H1 (cell line): ENCODE measurements at regions of chr1 and their contacts with region 1.

Region 1: DNA sequence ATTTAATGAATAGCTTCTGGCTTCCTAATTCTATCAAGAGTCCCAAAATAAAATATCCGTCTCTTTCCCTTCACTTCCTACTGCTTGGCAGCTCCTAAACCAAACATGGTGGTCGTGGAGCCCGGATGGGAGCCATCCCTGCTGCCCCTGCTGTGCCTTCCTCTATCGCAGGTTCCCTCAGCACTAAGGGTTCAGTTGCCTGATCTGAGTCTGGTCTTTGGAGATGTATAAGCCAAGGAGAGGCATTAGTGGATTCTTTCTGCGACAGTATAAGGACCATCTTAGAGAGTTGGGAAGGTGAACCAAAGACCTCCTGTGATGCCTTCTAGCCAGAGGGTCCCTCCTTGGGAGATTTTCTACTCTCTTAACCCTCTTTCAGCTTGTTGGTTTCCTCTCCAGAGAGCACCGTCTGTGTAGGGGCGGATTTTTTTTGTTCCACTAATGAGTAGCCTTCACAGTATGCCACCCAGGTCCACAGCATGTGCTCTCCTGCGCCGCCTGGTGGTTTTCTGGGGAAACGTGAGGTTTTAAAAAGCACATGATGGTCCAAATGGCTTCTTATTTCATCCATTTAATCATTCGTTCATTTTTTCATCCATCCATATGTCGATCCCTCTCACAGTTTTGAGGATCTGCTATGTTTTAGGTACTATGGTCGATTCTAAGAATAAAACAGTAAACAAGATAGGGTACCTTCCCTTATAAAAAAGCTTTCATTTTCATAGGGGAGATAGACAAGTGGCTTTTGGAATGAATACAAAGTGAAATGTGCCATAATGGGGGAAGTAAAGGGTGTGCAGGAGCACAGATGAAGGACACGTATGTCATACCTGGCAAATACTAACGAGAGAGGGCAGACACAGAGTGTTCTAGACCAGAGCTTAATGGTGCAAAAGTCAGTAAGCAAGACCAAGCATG is 71.0 kb downstream of the NFASC start:
- DNase-seq: peak; percentile 53 to 92
- H3K4me3 ChIP-seq: no peak overlapping the region
- H3K27ac ChIP-seq: no peak overlapping the region
- H3K4me1 ChIP-seq: peaks cover 0 to 3% (median 2%) of the 10 kb centered on the region in 4 experiments; a peak in 2 of 7 replicates
- H3K27me3 ChIP-seq: no peaks in the 10 kb centered on the region; a peak in 1 of 7 replicates
- CTCF ChIP-seq: peak; percentile 78 to 94 (median 93)
- EP300 ChIP-seq: no peak
- POLR2A ChIP-seq: no peak
- RAD21 ChIP-seq: peak; percentile 83 to 88

Region 2: GRCh38 chr1:204814181-204814884 is 127.3 kb before region 1 on chr1:
- CTCF ChIA-PET with region 1: interaction called, 278 read pairs
- POLR2A ChIA-PET with region 1: no interaction called
- DNase-seq: no peak
- H3K4me3 ChIP-seq: no peak overlapping the region
- H3K27ac ChIP-seq: no peak overlapping the region
- H3K4me1 ChIP-seq: no peaks in the 10 kb centered on the region
- H3K27me3 ChIP-seq: no peaks in the 10 kb centered on the region
- CTCF ChIP-seq: no peak
- EP300 ChIP-seq: no peak
- POLR2A ChIP-seq: no peak
- RAD21 ChIP-seq: no peak

Region 3: GRCh38 chr1:204858363-204858821 is 83.3 kb before region 1 on chr1:
- CTCF ChIA-PET with region 1: interaction called, 20 read pairs
- POLR2A ChIA-PET with region 1: no interaction called
- DNase-seq: no peak
- H3K4me3 ChIP-seq: no peak overlapping the region
- H3K27ac ChIP-seq: no peak overlapping the region
- H3K4me1 ChIP-seq: peaks cover 2 to 5% (median 3%) of the 10 kb centered on the region in 4 experiments; a peak in 5 of 7 replicates
- H3K27me3 ChIP-seq: no peaks in the 10 kb centered on the region
- CTCF ChIP-seq: no peak
- EP300 ChIP-seq: no peak
- POLR2A ChIP-seq: no peak
- RAD21 ChIP-seq: no peak

Region 4: GRCh38 chr1:204924013-204924967 is 17.4 kb before region 1 on chr1:
- CTCF ChIA-PET with region 1: interaction called, 59 read pairs
- POLR2A ChIA-PET with region 1: interaction called, 10 read pairs
- DNase-seq: peak in 1 of 2 experiments; percentile 79
- H3K4me3 ChIP-seq: peak overlapping the region in 1 of 4 experiments; percentile 27; a peak in 2 of 8 replicates
- H3K27ac ChIP-seq: no peak overlapping the region
- H3K4me1 ChIP-seq: peaks cover 25 to 46% (median 41%) of the 10 kb centered on the region in 4 experiments
- H3K27me3 ChIP-seq: no peaks in the 10 kb centered on the region
- CTCF ChIP-seq: no peak
- EP300 ChIP-seq: peak in 1 of 2 experiments; percentile 92; a peak in 1 of 3 replicates
- POLR2A ChIP-seq: no peak
- RAD21 ChIP-seq: no peak

Region 5: DNA sequence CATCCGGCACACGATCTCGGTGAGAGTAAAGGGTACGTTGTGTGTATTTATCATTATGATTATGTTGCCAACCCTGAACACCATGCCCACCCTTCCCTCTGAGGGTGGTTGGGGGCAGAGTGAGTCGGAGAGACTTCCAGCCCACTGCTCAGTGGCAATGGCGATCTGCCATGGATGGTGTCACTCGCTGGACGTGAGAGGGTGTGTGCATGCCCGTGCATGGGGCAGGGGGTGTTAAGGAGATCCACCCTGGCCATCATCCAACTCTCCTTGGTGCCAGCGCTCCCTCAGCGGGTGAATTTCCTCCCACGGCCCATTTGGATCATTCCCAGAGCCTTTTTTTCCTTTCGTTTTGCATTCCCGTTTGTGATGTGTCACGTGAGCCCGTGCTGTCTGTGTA is 27.3 kb after region 1 on chr1:
- CTCF ChIA-PET with region 1: interaction called, 20 read pairs
- POLR2A ChIA-PET with region 1: no interaction called
- DNase-seq: no peak
- H3K4me3 ChIP-seq: no peak overlapping the region
- H3K27ac ChIP-seq: no peak overlapping the region
- H3K4me1 ChIP-seq: no peaks in the 10 kb centered on the region
- H3K27me3 ChIP-seq: no peaks in the 10 kb centered on the region
- CTCF ChIP-seq: no peak
- EP300 ChIP-seq: no peak
- POLR2A ChIP-seq: no peak
- RAD21 ChIP-seq: no peak

Region 6: DNA sequence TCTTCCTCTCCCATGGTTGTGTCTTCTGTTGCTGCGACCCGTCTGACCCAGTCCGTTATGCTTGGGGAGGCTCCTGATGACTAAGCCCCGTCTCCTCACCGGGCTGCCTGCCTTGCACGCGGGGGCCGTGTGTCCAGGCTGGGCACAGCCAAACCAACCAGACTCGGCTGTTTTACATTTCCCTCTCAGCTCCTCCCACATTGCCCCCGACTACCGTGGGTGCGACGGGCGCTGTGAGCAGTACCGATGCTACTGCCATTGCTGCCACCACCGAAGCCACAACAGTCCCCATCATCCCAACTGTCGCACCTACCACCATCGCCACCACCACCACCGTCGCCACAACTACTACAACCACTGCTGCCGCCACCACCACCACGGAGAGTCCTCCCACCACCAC is 55.3 kb after region 1 on chr1:
- CTCF ChIA-PET with region 1: no interaction called
- POLR2A ChIA-PET with region 1: no interaction called
- DNase-seq: no peak
- H3K4me3 ChIP-seq: no peak overlapping the region
- H3K27ac ChIP-seq: no peak overlapping the region
- H3K4me1 ChIP-seq: peaks cover 2 to 7% (median 2%) of the 10 kb centered on the region in 4 experiments; a peak in 6 of 7 replicates
- H3K27me3 ChIP-seq: no peaks in the 10 kb centered on the region; a peak in 1 of 7 replicates
- CTCF ChIP-seq: no peak
- EP300 ChIP-seq: no peak
- POLR2A ChIP-seq: no peak
- RAD21 ChIP-seq: no peak